SK-N-SH (cell line): ENCODE measurements at regions of chr16 and their contacts with region 1.

Region 1: GRCh38 chr16:31458844-31459721 is at the start of gene ARMC5:
- DNase-seq: peak; percentile 89
- H3K4me3 ChIP-seq: peak within 1 kb of the TSS; percentile 72 to 88
- H3K27ac ChIP-seq: peak within 1 kb of the TSS; percentile 96 to 97
- H3K4me1 ChIP-seq: peaks cover 33 to 35% of the 10 kb centered on the region in 2 experiments; a peak in 2 of 4 replicates
- H3K27me3 ChIP-seq: no peaks in the 10 kb centered on the region
- CTCF ChIP-seq: peak; percentile 73
- EP300 ChIP-seq: no peak; a peak in 1 of 4 replicates
- RAD21 ChIP-seq: no peak; the same call in 1 of the 2 replicates
- polyA plus RNA-seq, gene ARMC5: 7.0 and 8.9 TPM in 2 replicates

Region 2: GRCh38 chr16:31440516-31441184 is 18.4 kb before region 1 on chr16:
- CTCF ChIA-PET with region 1: interaction called, 80 read pairs
- POLR2A ChIA-PET with region 1: interaction called, 15 read pairs
- DNase-seq: no peak
- H3K4me3 ChIP-seq: no peak overlapping the region
- H3K27ac ChIP-seq: peak overlapping the region in 1 of 2 experiments; percentile 51; a peak in 1 of 4 replicates
- H3K4me1 ChIP-seq: peaks cover 0 to 5% of the 10 kb centered on the region in 2 experiments; a peak in 1 of 4 replicates
- H3K27me3 ChIP-seq: no peaks in the 10 kb centered on the region
- CTCF ChIP-seq: no peak
- EP300 ChIP-seq: no peak
- RAD21 ChIP-seq: no peak

Region 3: GRCh38 chr16:31472709-31473203 is 13.7 kb after region 1 on chr16:
- CTCF ChIA-PET with region 1: interaction called, 68 read pairs
- POLR2A ChIA-PET with region 1: interaction called, 12 read pairs
- DNase-seq: peak; percentile 98
- H3K4me3 ChIP-seq: peak overlapping the region; percentile 54 to 81
- H3K27ac ChIP-seq: peak overlapping the region; percentile 72 to 94
- H3K4me1 ChIP-seq: peaks cover 0 to 12% of the 10 kb centered on the region in 2 experiments; a peak in 1 of 4 replicates
- H3K27me3 ChIP-seq: no peaks in the 10 kb centered on the region
- CTCF ChIP-seq: peak; percentile 91
- EP300 ChIP-seq: no peak
- RAD21 ChIP-seq: no peak; the same call in 1 of the 2 replicates

Region 4: DNA sequence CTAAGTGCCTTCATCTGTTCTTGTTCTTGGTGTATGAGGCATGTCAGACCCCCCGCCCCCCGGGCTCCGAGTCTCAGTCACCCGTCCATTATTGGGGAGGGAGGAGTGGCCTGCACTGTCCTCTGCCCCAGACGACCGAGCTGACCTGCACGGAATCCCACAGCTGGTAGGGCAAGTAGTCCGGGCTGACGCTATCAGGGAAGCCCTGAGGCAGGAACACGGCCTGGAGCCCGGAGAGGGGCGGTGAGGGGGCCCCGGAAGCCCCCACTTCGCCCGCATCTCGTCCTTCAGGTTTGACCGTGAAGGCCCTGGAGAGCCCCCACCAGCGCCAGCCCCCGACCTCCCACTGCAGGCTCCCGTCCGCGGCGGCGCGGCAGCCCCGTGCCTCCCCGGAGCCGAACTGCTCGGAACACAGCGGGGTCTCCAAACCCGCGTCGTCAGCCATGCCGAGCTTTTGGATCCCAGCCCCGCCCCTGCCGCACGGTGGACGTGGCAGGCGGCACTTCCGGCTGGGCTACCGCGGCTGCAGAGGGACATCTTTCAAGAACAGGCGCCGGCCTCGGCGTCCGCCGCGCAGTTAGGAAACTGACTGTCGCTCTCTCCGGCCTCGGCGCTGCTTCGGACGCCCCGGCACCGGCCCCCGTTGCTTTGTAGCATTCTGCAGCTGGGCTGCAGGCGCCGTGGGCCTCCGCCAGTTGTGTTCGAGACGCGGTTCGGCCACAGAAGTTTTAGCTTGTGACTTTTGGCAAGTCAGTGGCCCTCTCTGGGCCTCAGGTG is 49.0 kb after region 1 on chr16 and contains the start of gene RUSF1:
- CTCF ChIA-PET with region 1: interaction called, 3 read pairs
- POLR2A ChIA-PET with region 1: interaction called, 14 read pairs
- DNase-seq: peak; percentile 94
- H3K4me3 ChIP-seq: peak within 1 kb of the TSS; percentile 92 to 96
- H3K27ac ChIP-seq: peak within 1 kb of the TSS; percentile 80 to 87
- H3K4me1 ChIP-seq: peaks cover 0 to 18% of the 10 kb centered on the region in 2 experiments; a peak in 3 of 4 replicates
- H3K27me3 ChIP-seq: no peaks in the 10 kb centered on the region
- CTCF ChIP-seq: no peak
- EP300 ChIP-seq: peak in 1 of 2 experiments; percentile 33; a peak in 1 of 4 replicates
- RAD21 ChIP-seq: no peak
- polyA plus RNA-seq, gene RUSF1: 36.5 and 46.8 TPM in 2 replicates

Region 5: GRCh38 chr16:31529398-31530312 is 70.6 kb after region 1 on chr16:
- CTCF ChIA-PET with region 1: no interaction called
- POLR2A ChIA-PET with region 1: no interaction called
- DNase-seq: no peak
- H3K4me3 ChIP-seq: 0 out of 4 replicates have a peak overlapping the region, but pooled peaks of 1 of the 2 experiments have one; percentile 23
- H3K27ac ChIP-seq: no peak overlapping the region
- H3K4me1 ChIP-seq: no peaks in the 10 kb centered on the region
- H3K27me3 ChIP-seq: peaks cover 55% of the 10 kb centered on the region
- CTCF ChIP-seq: no peak
- EP300 ChIP-seq: no peak
- RAD21 ChIP-seq: no peak

Region 6: DNA sequence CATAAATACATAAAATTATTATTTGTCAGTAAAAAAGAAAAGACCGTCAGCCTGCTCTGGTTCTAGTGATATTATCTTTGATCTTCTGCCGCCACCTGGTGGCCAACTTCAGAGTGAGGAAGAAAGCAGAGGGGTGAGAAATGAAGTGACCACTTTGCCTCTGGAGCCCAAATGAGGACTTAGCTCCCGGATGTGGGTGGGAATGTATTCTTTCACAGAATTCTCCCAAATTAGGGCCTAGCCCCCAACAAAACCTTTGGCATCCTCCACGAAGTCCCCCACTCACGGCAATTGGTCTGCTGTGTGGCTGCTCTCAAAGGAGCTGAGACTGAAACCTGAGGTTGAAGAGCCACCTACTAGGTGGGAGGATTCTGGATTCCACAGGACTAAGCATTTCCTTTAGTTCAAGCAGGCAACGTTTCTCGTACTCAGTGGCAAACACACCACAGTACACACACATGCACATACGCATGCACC is 409.6 kb after region 1 on chr16:
- CTCF ChIA-PET with region 1: interaction called, 18 read pairs
- POLR2A ChIA-PET with region 1: interaction called, 4 read pairs
- DNase-seq: peak; percentile 65
- H3K4me3 ChIP-seq: peak overlapping the region in 1 of 2 experiments; percentile 48; a peak in 2 of 4 replicates
- H3K27ac ChIP-seq: 0 out of 4 replicates have a peak overlapping the region, but pooled peaks of 1 of the 2 experiments have one; percentile 55
- H3K4me1 ChIP-seq: peaks cover 3 to 5% of the 10 kb centered on the region in 2 experiments; a peak in 2 of 4 replicates
- H3K27me3 ChIP-seq: peaks cover 4% of the 10 kb centered on the region; the same call in 1 of the 2 replicates
- CTCF ChIP-seq: peak; percentile 86
- EP300 ChIP-seq: no peak
- RAD21 ChIP-seq: peak; percentile 82